ENCODE measurements at regions of chr1 and their contacts with region 1.

Region 1: DNA sequence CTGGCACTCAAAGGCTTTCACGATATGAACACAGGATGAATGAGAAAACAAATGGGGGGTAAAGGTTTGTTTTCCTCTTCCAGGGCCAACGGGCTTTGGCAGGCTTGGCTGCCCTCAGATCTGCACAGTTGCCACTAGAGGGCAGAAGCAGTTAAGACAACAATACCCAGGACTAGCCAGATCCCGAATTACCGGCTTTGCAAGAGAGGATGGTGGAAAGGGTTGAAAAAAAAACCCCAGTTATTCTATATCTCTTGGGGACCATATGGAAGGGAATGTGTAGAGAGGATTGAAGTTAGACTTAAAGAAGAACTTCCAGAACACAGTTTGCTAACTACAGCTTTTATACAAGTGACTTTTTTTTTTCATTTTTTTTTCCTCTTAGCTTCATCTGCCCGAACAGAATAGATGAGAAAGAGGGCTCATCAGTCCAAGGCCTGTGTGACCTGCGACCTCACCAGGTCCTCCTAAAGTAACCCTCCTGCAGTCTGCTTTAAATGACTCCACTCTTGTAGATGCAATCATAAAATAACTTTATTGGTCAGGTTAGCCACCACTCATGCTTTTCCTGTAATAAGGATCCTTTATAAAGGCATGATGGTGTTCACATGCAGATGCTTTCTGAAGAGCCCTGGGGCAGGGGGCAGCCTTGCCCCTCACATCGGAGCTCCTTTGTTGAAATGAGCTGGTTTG is 10.7 kb downstream of the FMOD start:
- DNase-seq: peak; percentile 81 to 83
- H3K4me3 ChIP-seq: no peak overlapping the region
- H3K4me3 Mint-ChIP-seq: no peak overlapping the region
- H3K27ac Mint-ChIP-seq: no peak overlapping the region
- H3K4me1 ChIP-seq: peaks cover 5% of the 10 kb centered on the region; the same call in 1 of the 2 replicates
- H3K4me1 Mint-ChIP-seq: peaks cover 6% of the 10 kb centered on the region
- H3K27me3 ChIP-seq: no peaks in the 10 kb centered on the region
- H3K27me3 Mint-ChIP-seq: no peaks in the 10 kb centered on the region
- CTCF ChIP-seq: peak; percentile 90

Region 2: DNA sequence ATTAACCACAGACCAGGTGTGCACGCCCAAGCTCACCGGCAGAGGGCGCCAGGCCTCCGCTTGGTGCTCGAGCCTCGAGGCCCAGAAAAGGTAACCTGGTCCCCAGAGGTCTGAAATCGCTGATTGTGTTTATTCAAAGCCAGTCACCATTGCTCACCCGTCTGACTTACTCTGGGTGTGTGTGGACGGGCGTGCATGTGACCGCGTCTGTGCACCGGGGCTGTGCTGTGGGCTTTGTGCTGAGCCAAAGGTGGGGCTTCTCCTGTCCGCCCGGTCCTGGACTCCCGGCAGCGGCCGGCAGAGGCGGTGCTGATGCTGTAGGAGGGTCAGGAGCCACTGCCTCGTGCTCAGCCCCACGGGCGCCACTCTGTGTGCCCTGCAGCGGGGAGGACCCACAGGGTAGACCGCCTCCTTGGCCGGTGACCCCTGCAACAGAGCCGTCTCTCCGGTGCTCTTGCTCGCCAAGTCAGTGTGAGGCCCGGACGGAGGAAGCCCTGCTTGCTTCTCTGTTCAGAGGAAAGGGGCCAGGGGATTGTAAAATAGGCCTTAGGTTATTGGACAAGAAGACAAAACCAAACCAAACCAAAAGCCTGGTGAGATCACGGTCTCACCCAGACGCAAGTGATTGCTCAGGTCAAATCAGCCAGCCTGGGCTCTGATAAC is 66.9 kb before region 1 on chr1:
- CTCF ChIA-PET with region 1: interaction called, 10 read pairs
- POLR2A ChIA-PET with region 1: no interaction called
- intact Hi-C with region 1: loop called (anchors 1 kb)
- DNase-seq: peak; percentile 84 to 92
- H3K4me3 ChIP-seq: no peak overlapping the region
- H3K4me3 Mint-ChIP-seq: no peak overlapping the region
- H3K27ac Mint-ChIP-seq: no peak overlapping the region
- H3K4me1 ChIP-seq: peaks cover 17% of the 10 kb centered on the region
- H3K4me1 Mint-ChIP-seq: peaks cover 4% of the 10 kb centered on the region
- H3K27me3 ChIP-seq: no peaks in the 10 kb centered on the region
- H3K27me3 Mint-ChIP-seq: no peaks in the 10 kb centered on the region
- CTCF ChIP-seq: peak; percentile 95 to 97

Region 3: DNA sequence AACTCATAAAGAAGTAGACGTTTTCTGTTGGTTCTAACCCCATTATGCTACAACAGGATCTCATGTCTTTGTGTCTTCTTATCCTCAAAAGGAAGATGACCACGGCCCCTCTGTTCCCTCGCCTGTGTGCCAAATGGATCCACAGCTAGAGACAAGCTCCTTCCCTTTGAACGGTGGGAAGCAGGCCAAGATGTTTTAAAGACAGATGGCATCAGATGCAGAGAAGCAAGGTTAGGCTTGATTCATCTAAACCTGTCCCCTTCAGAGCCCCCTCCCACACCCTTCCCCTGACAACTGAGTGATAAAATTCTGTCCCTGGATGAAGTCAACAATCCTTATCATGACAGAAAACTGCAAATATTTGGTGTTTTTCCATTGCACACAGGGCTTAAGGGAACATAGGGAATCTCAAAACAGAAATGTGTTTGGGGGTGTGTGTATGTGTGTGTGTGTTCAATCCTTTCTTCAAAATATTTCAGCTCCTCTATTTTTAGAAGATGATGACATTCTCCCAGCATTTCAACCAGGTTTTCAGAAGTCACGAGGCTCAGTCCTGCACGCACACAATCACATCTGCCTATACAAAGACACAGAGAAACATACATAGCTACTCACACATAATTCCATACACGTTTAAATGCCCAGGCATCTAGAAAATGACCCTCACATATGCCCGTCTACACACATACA is 38.4 kb after region 1 on chr1:
- CTCF ChIA-PET with region 1: no interaction called
- POLR2A ChIA-PET with region 1: no interaction called
- intact Hi-C with region 1: no loop called
- DNase-seq: no peak
- H3K4me3 ChIP-seq: no peak overlapping the region
- H3K4me3 Mint-ChIP-seq: no peak overlapping the region
- H3K27ac Mint-ChIP-seq: no peak overlapping the region
- H3K4me1 ChIP-seq: peaks cover 6% of the 10 kb centered on the region; the same call in 1 of the 2 replicates
- H3K4me1 Mint-ChIP-seq: peaks cover 12% of the 10 kb centered on the region
- H3K27me3 ChIP-seq: no peaks in the 10 kb centered on the region; the same call in 1 of the 2 replicates
- H3K27me3 Mint-ChIP-seq: no peaks in the 10 kb centered on the region
- CTCF ChIP-seq: no peak

Region 4: GRCh38 chr1:203428981-203429599 is 88.8 kb after region 1 on chr1:
- CTCF ChIA-PET with region 1: interaction called, 6 read pairs
- POLR2A ChIA-PET with region 1: no interaction called
- intact Hi-C with region 1: loop called (anchors 5 kb)
- DNase-seq: peak in 1 of 2 experiments; percentile 31
- H3K4me3 ChIP-seq: peak overlapping the region; percentile 8; the same call in 1 of the 2 replicates
- H3K4me3 Mint-ChIP-seq: no peak overlapping the region
- H3K27ac Mint-ChIP-seq: peak overlapping the region; percentile 19
- H3K4me1 ChIP-seq: peaks cover 37% of the 10 kb centered on the region
- H3K4me1 Mint-ChIP-seq: peaks cover 36% of the 10 kb centered on the region
- H3K27me3 ChIP-seq: no peaks in the 10 kb centered on the region
- H3K27me3 Mint-ChIP-seq: no peaks in the 10 kb centered on the region
- CTCF ChIP-seq: no peak

Region 5: GRCh38 chr1:203440771-203441170 is 100.5 kb after region 1 on chr1:
- CTCF ChIA-PET with region 1: interaction called, 26 read pairs
- POLR2A ChIA-PET with region 1: no interaction called
- intact Hi-C with region 1: loop called (anchors 1 kb)
- DNase-seq: peak; percentile 60
- H3K4me3 ChIP-seq: no peak overlapping the region
- H3K4me3 Mint-ChIP-seq: no peak overlapping the region
- H3K27ac Mint-ChIP-seq: no peak overlapping the region
- H3K4me1 ChIP-seq: 0 out of 2 replicates have a peak, but pooled peaks cover 3% of the 10 kb centered on the region
- H3K4me1 Mint-ChIP-seq: peaks cover 7% of the 10 kb centered on the region
- H3K27me3 ChIP-seq: no peaks in the 10 kb centered on the region
- H3K27me3 Mint-ChIP-seq: peaks cover 2% of the 10 kb centered on the region
- CTCF ChIP-seq: peak; percentile 29 to 67

Region 6: DNA sequence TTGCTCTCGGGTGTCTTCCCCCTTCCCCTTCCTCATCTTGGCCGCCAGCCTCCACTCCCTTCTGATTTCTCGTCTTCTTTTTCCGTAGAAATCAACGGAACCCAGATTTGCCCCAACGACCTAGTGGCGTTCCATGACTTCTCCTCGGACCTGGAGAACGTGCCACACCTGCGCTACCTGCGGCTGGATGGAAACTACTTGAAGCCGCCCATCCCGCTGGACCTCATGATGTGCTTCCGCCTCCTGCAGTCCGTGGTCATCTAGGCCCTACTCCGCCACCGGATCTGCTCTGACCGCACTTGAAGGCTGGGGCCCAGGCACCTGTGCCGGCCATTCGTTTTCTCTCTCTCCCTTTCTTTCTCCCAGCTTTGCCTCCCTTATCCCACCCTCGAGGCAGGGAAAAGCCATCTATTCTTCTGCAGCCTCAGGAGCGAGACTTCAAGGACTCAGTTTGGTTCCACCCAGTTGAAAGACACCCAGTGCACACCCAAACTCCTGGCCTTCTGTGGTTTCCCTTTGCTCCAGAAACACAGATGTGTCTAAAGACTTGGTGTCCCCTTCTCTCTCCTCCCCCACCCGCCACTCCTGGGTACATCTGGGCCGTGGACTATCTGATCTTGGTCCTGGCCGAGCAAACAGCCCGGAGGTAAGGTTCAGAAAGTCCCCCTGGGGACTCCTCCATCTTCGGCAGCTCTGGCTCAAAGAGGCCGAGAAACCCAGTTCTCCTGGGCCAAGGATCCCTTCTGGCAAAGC is 146.5 kb after region 1 on chr1:
- CTCF ChIA-PET with region 1: interaction called, 7 read pairs
- POLR2A ChIA-PET with region 1: no interaction called
- intact Hi-C with region 1: loop called (anchors 1 kb)
- DNase-seq: no peak
- H3K4me3 ChIP-seq: no peak overlapping the region
- H3K4me3 Mint-ChIP-seq: peak overlapping the region; percentile 58
- H3K27ac Mint-ChIP-seq: no peak overlapping the region
- H3K4me1 ChIP-seq: no peaks in the 10 kb centered on the region
- H3K4me1 Mint-ChIP-seq: no peaks in the 10 kb centered on the region
- H3K27me3 ChIP-seq: no peaks in the 10 kb centered on the region
- H3K27me3 Mint-ChIP-seq: peaks cover 9% of the 10 kb centered on the region
- CTCF ChIP-seq: no peak

Region 7: GRCh38 chr1:203504397-203505250 is 164.4 kb after region 1 on chr1:
- CTCF ChIA-PET with region 1: interaction called, 10 read pairs
- POLR2A ChIA-PET with region 1: no interaction called
- intact Hi-C with region 1: no loop called
- DNase-seq: peak; percentile 77 to 87
- H3K4me3 ChIP-seq: no peak overlapping the region
- H3K4me3 Mint-ChIP-seq: no peak overlapping the region
- H3K27ac Mint-ChIP-seq: no peak overlapping the region
- H3K4me1 ChIP-seq: peaks cover 9% of the 10 kb centered on the region; the same call in 1 of the 2 replicates
- H3K4me1 Mint-ChIP-seq: peaks cover 10% of the 10 kb centered on the region
- H3K27me3 ChIP-seq: no peaks in the 10 kb centered on the region
- H3K27me3 Mint-ChIP-seq: peaks cover 9% of the 10 kb centered on the region
- CTCF ChIP-seq: peak; percentile 68 to 77

Measured in Caco-2 (cell line).